ENCODE measurements at regions of chr15 and their contacts with region 1.

Region 1: DNA sequence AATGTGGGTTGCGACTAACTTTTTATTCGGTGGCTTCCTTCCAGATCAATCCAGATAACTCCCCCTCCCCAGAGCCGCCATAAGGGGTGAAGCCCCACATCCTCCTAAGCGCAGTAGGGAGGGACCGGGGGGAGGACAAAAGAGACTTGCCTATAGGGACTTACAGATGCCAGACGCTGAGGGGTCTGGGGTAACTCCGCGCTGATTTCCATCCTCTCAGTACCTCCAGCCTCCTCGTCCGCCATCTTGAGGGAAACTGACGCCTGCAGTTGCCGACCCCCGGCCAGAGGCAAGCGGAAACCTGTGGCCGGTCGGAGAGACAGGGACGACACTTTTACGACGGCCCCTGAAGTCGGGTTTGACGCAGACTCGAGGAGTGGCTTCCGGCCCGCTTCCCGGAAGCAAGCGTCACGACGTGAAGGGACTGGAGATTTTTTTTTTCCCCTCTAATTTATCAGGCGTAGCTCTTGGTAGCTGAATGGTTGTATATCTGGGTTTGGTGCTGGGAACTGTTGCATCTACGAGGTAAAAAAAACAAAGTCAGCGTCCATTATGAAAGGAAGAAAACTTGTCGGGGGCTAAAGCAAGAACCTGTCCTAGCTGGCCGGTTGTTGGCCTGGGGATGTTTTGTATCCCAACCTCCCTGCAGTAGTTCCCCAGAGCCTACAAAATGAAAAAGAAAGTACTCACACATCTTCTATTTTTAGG is at the start of gene UBR1:
- DNase-seq: peak; percentile 93 to 95 (median 94)
- ATAC-seq: peak; percentile 89 to 98 (median 98)
- H3K4me3 ChIP-seq: peak within 1 kb of the TSS; percentile 63 to 90 (median 80)
- H3K27ac ChIP-seq: peak within 1 kb of the TSS; percentile 62 to 98 (median 91)
- H3K4me1 ChIP-seq: peaks cover 0 to 48% (median 22%) of the 10 kb centered on the region in 12 donors
- H3K27me3 ChIP-seq: no peaks in the 10 kb centered on the region
- CTCF ChIP-seq: peak in 1 of 12 donors; percentile 11
- POLR2A ChIP-seq: peak in 1 of 2 donors; percentile 56
- total RNA-seq, gene UBR1: 21.0 to 38.9 (median 25.9) TPM

Region 2: GRCh38 chr15:43070893-43071292 is 35.0 kb before region 1 on chr15:
- intact Hi-C with region 1: no loop called
- DNase-seq: no peak
- ATAC-seq: peak in 2 of 4 donors; percentile 37 to 63
- H3K4me3 ChIP-seq: peak overlapping the region in 9 of 12 donors; percentile 6 to 52 (median 39)
- H3K27ac ChIP-seq: peak overlapping the region in 6 of 12 donors; percentile 1 to 49 (median 15)
- H3K4me1 ChIP-seq: peaks cover 0 to 5% (median 0%) of the 10 kb centered on the region in 12 donors
- H3K27me3 ChIP-seq: no peaks in the 10 kb centered on the region
- CTCF ChIP-seq: no peak
- POLR2A ChIP-seq: no peak

Region 3: DNA sequence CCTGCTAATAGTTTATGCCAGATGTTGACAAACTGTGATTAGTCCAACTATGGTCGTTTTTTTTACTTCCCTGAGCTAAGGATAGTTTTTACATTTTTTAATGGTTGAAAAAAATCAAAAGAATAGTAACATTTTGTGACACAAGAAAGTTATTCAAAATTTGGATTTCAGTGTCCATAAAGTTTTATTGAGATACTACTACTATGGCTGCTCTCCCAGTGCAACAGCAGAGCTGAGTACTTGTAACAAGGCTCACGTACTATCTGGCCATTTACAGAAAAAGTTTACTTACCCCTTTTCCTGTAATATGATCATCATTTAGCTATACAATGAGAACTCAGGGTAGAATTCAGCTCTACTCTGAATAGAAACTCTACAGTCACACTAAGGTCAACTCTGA is 15.9 kb after region 1 on chr15:
- intact Hi-C with region 1: loop called in 3 of 10 experiments (anchors 2 kb)
- DNase-seq: no peak
- ATAC-seq: no peak
- H3K4me3 ChIP-seq: no peak overlapping the region
- H3K27ac ChIP-seq: peak overlapping the region in 1 of 12 donors; percentile 87
- H3K4me1 ChIP-seq: peaks cover 0 to 11% (median 0%) of the 10 kb centered on the region in 12 donors
- H3K27me3 ChIP-seq: no peaks in the 10 kb centered on the region
- CTCF ChIP-seq: no peak
- POLR2A ChIP-seq: no peak

Region 4: DNA sequence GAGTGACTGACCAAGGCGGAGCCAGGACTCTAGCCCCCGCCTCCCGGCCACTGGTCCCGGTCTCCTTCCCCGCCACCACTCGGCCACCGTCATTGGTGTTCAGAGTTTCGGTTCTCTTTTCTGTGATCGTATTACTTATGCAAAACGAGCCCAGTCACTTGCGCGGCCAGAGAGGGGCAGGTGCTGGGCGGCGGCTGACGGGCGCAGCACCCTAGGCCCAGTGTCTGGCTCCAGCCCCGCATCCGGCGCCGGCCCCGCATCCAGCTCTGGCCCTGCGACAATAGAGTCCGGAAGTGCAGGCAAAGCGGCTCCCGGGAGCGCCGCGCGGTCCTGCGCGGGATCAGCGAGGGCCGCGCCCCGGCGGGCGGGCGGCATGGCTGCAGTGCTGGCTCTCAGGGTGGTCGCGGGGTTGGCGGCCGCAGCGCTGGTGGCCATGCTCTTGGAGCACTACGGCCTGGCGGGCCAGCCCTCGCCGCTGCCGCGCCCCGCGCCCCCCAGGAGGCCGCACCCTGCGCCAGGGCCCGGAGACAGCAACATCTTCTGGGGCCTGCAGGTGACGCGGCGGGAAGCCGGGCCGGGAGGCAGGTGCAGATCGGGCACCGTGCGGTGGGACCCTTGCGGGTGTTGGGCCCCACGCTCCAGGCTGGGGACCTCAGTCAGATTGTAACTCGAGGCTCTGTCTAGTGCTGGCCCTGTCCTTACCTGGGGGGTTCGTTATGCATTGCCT is 27.7 kb after region 1 on chr15 and contains the start of gene TMEM62:
- intact Hi-C with region 1: loop called in 2 of 10 experiments (anchors 1 to 2 kb)
- DNase-seq: peak; percentile 87 to 91 (median 90)
- ATAC-seq: peak; percentile 89 to 96 (median 96)
- H3K4me3 ChIP-seq: peak within 1 kb of the TSS; percentile 65 to 95 (median 82)
- H3K27ac ChIP-seq: peak within 1 kb of the TSS; percentile 53 to 89 (median 85)
- H3K4me1 ChIP-seq: peaks cover 0 to 26% (median 14%) of the 10 kb centered on the region in 12 donors
- H3K27me3 ChIP-seq: no peaks in the 10 kb centered on the region
- CTCF ChIP-seq: peak in 2 of 12 donors; percentile 7 to 13
- POLR2A ChIP-seq: peak in 1 of 2 donors; percentile 70
- total RNA-seq, gene TMEM62: 8.5 to 18.5 (median 12.8) TPM

Measured in heart left ventricle (tissue), 16 donors.